Gastrocnemius medialis (tissue), 4 donors: ENCODE measurements at regions of chr4 and their contacts with region 1.

Region 1: GRCh38 chr4:173318648-173319211 is 15.4 kb downstream of the HMGB2 start:
- DNase-seq: no peak
- ATAC-seq: peak; percentile 73 to 80
- H3K4me3 ChIP-seq: no peak overlapping the region
- H3K27ac ChIP-seq: no peak overlapping the region
- H3K4me1 ChIP-seq: peaks cover 6 to 10% of the 10 kb centered on the region in 2 donors
- H3K27me3 ChIP-seq: no peaks in the 10 kb centered on the region
- CTCF ChIP-seq: peak in 4 of 5 experiments; percentile 37 to 60 (median 48)
- POLR2A ChIP-seq: no peak

Region 2: GRCh38 chr4:173128199-173128890 is 190.4 kb before region 1 on chr4:
- in situ Hi-C with region 1: no loop called
- intact Hi-C with region 1: no loop called
- DNase-seq: no peak
- ATAC-seq: no peak
- H3K4me3 ChIP-seq: no peak overlapping the region
- H3K27ac ChIP-seq: no peak overlapping the region
- H3K4me1 ChIP-seq: no peaks in the 10 kb centered on the region
- H3K27me3 ChIP-seq: no peaks in the 10 kb centered on the region
- CTCF ChIP-seq: no peak
- POLR2A ChIP-seq: no peak

Region 3: GRCh38 chr4:173413036-173413435 is 94.3 kb after region 1 on chr4:
- in situ Hi-C with region 1: loop called (anchors 5 kb)
- intact Hi-C with region 1: loop called (anchors 1 kb)
- DNase-seq: peak in 1 of 2 donors; percentile 22
- ATAC-seq: no peak
- H3K4me3 ChIP-seq: no peak overlapping the region
- H3K27ac ChIP-seq: no peak overlapping the region
- H3K4me1 ChIP-seq: no peaks in the 10 kb centered on the region
- H3K27me3 ChIP-seq: no peaks in the 10 kb centered on the region
- CTCF ChIP-seq: no peak
- POLR2A ChIP-seq: no peak

Region 4: GRCh38 chr4:173494013-173494970 is 175.6 kb after region 1 on chr4:
- in situ Hi-C with region 1: loop called in 1 of 4 experiments (anchors 10 kb)
- intact Hi-C with region 1: loop called (anchors 5 kb)
- DNase-seq: peak; percentile 22 to 34
- ATAC-seq: peak; percentile 84 to 86
- H3K4me3 ChIP-seq: peak overlapping the region; percentile 16 to 46 (median 34)
- H3K27ac ChIP-seq: no peak overlapping the region
- H3K4me1 ChIP-seq: peaks cover 0 to 4% of the 10 kb centered on the region in 2 donors
- H3K27me3 ChIP-seq: peaks cover 6 to 8% (median 7%) of the 10 kb centered on the region in 3 donors
- CTCF ChIP-seq: peak; percentile 17 to 72 (median 56)
- POLR2A ChIP-seq: no peak